Astrocyte of the cerebellum (primary cell): ENCODE measurements at regions of chr17 and their contacts with region 1.

Region 1: DNA sequence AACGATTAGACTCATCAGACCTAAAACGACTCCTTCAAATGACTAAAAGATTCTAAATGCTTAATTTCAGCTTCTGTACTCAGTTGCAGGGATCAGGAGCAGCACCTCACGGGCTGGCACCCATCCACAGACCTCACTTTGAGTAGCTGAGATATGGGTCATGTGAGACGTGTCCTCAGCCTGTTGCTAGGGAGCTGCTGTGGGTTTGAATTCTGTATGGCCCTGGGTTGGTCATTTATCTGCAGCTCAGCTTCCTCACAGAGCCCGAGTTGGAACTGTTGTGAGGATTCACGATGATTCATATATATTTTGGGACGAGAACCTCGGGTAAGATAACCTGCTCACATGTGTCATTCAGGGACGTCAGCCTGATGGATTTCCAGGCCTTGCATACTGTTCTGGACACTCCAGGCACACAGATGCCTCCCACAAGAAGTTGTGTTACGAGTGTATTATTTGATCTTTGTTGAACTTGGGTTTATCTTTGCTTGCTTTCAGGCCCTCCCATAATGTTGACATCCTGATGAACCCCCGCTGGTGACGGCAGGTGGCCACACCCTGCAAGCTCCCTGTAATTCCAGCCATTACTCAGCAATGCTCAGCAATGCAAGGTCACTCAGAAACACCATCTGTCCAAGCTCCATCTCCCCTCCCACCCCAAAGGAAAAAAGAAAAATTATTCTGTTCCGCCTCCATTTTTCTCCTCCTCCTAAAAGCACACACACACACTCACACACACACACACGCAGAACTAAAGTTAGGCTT is 137.6 kb downstream of the RBFOX3 start:
- DNase-seq: no peak
- H3K4me3 ChIP-seq: no peak overlapping the region
- CTCF ChIP-seq: no peak

Region 2: GRCh38 chr17:79658811-79659207 is 185.5 kb after region 1 on chr17:
- in situ Hi-C with region 1: loop called (anchors 25 kb)
- DNase-seq: no peak
- H3K4me3 ChIP-seq: no peak overlapping the region
- CTCF ChIP-seq: peak; percentile 43